B cell (primary cell): ENCODE measurements at regions of chr11 and their contacts with region 1.

Region 1: DNA sequence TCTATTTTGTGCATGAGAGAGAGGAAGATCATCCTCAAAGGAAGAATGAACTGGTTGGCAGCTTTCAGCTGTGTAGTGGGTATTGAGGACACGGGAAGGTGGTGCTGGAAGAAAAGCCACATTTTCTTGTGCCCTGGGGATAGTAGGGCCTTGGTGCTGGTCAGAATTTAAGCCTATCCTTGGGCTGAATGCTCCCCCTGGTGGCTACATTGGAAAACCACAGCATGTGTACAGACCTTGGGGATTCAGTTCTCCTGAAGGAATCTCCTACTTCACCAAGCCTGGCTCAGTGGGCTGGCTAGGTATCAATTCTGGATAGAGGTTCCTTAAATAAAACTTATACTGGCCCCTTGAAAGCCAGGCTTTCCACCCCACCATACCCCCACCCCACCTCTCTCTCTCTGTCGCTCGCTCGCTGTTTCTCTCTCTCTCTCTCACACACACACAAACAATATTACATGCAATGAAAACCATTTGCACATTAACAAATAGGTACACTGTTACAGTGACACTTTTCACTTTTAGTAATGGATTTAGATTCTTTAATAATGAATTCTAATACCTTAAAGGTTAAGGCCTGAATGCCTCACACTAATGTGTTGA is 2.8 kb upstream of the OR51M1 start:
- DNase-seq: peak; percentile 26
- ATAC-seq: no peak
- H3K4me3 ChIP-seq: no peak overlapping the region
- H3K4me3 Mint-ChIP-seq: no peak overlapping the region
- H3K27ac ChIP-seq: no peak overlapping the region
- H3K27ac Mint-ChIP-seq: no peak overlapping the region
- H3K4me1 ChIP-seq: no peaks in the 10 kb centered on the region
- H3K4me1 Mint-ChIP-seq: no peaks in the 10 kb centered on the region
- H3K27me3 ChIP-seq: peaks cover 0 to 2% (median 0%) of the 10 kb centered on the region in 4 experiments
- H3K27me3 Mint-ChIP-seq: peaks cover 9% of the 10 kb centered on the region
- CTCF ChIP-seq: peak; percentile 66

Region 2: DNA sequence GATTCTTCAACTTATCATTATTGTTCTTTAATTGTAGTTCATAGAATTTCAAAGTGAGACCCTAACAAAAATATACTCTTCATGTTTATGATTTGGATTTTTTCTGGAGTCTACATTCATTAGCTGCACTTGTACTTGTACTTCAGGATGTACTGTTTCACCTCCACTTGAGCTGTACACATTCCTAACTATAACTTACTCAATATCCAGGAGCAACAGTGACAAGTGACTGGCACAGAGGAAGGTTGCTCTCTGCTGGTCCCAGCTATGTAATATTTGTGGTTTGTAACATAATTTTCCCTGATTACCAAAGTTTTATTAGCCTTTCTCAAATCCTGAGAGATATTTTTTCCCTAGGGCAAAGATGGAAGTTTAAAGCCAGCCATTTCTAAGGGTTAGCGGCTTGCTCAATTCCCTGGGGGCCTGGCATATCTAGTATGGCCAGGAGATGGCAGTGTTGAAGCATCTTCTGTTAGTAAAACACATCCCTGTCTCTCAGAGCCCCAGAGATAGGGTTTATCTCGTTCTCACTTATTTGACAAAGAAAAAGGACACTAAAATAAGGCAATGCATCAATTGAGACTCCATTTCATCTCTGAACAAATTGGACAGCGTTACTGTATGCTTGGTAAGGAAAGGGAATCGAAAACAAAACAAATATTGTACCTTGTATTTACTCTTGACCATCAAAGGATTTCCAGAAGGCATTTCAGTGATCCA is 256.9 kb before region 1 on chr11:
- CTCF ChIA-PET with region 1: interaction called, 3 read pairs
- POLR2A ChIA-PET with region 1: no interaction called
- intact Hi-C with region 1: loop called (anchors 5 kb)
- DNase-seq: peak; percentile 63
- ATAC-seq: peak; percentile 45
- H3K4me3 ChIP-seq: no peak overlapping the region
- H3K4me3 Mint-ChIP-seq: no peak overlapping the region
- H3K27ac ChIP-seq: no peak overlapping the region
- H3K27ac Mint-ChIP-seq: no peak overlapping the region
- H3K4me1 ChIP-seq: no peaks in the 10 kb centered on the region
- H3K4me1 Mint-ChIP-seq: no peaks in the 10 kb centered on the region
- H3K27me3 ChIP-seq: peaks cover 0 to 4% (median 0%) of the 10 kb centered on the region in 4 experiments
- H3K27me3 Mint-ChIP-seq: peaks cover 18% of the 10 kb centered on the region
- CTCF ChIP-seq: peak; percentile 89